B cell (primary cell): ENCODE measurements at regions of chr16 and their contacts with region 1.

Region 1: DNA sequence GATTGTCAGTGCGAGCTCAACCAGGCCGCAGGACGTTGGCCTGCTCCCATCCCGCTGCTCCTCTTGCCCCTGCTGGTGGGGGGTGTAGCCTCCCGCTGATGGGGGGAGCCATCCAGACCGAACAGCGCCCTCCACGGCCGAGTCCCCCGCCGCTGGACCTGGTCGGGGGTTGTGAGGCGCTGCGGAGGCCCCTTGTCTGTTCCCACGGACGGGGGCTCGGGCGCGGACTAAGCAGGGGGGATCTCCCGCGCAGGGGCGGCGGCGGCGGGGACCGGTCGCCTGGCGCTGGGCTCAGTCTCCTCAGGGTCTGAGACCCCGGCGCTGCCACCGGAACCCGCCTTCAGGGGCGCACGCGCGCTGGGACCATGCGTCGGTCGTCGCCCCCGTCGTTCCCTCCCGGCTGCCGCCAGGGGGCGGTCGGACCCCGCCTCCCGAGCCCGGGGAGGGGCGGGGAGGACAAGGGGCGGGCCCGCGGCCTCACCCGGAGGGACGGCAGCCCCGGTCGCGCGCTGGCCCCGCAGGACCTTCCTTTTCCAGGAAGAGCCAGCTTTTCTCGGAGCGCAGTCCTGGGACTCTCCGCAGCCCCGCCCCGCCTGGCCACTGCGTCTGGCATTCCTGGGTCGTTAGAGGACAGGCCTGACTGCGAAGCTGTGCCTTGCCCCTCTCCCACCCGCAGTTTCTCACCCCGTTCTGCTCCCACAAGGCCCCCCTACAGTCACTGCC is 6.3 kb upstream of the IL32 start:
- DNase-seq: peak; percentile 90
- ATAC-seq: peak; percentile 97
- H3K4me3 ChIP-seq: peak overlapping the region in 4 of 5 experiments; percentile 75 to 93 (median 82)
- H3K4me3 Mint-ChIP-seq: peak overlapping the region; percentile 87
- H3K27ac ChIP-seq: peak overlapping the region; percentile 38 to 74
- H3K27ac Mint-ChIP-seq: peak overlapping the region; percentile 65
- H3K4me1 ChIP-seq: peaks cover 20 to 22% of the 10 kb centered on the region in 2 donors
- H3K4me1 Mint-ChIP-seq: peaks cover 20% of the 10 kb centered on the region
- H3K27me3 ChIP-seq: peaks cover 0 to 6% (median 0%) of the 10 kb centered on the region in 4 experiments
- H3K27me3 Mint-ChIP-seq: no peaks in the 10 kb centered on the region
- CTCF ChIP-seq: peak; percentile 94

Region 2: DNA sequence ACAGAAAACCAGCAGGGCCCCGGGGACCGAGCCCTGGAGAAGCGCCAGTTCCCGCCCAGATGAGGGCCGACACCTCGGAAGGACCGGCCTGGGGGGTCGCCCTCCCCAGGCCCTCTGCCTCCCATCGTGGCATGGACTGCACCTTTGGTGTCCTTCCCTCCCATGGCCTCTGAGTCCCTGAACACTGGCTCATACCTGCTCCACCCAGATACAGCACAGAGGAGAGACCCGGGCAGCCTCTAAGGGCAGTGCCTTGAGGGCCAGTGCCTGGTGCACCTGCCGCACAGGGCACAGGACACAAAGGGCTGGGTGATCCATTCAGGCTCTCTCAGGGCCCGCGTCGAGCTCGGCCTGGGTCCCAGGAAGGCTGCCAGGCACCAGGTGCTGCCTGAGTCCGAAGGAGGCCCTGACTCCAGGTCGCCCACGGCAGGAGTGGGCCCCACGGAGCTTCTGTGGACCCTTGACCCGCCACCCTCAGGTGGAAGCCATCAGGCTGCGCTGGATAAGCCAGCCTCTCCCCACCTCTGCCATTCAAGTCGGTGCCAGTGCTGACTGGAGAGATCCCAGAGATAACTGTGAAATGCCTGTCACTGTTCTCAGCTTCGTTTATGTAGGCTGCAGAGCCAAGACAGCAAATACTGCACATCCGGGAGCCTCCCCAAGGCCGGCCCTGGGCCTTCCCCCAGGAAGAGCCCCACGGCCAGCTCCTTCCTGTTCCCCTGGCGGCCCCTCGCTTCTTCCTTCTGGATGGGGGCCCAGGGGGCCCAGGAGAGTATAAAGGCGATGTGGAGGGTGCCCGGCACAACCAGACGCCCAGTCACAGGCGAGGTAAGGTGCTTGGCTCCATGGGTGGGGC is 229.4 kb before region 1 on chr16 and contains the start of gene ZG16B:
- CTCF ChIA-PET with region 1: no interaction called
- POLR2A ChIA-PET with region 1: no interaction called
- intact Hi-C with region 1: no loop called
- DNase-seq: no peak
- ATAC-seq: no peak
- H3K4me3 ChIP-seq: no peak within 1 kb of the TSS
- H3K4me3 Mint-ChIP-seq: no peak within 1 kb of the TSS
- H3K27ac ChIP-seq: no peak within 1 kb of the TSS
- H3K27ac Mint-ChIP-seq: no peak within 1 kb of the TSS
- H3K4me1 ChIP-seq: no peaks in the 10 kb centered on the region
- H3K4me1 Mint-ChIP-seq: no peaks in the 10 kb centered on the region
- H3K27me3 ChIP-seq: peaks cover 0 to 29% (median 5%) of the 10 kb centered on the region in 4 experiments
- H3K27me3 Mint-ChIP-seq: peaks cover 16% of the 10 kb centered on the region
- CTCF ChIP-seq: no peak
- total RNA-seq, gene ZG16B: not detected in 2 replicates

Region 3: GRCh38 chr16:3029537-3030402 is 29.4 kb before region 1 on chr16:
- CTCF ChIA-PET with region 1: interaction called, 11 read pairs
- POLR2A ChIA-PET with region 1: interaction called, 3 read pairs
- intact Hi-C with region 1: loop called (anchors 1 kb)
- DNase-seq: peak; percentile 54
- ATAC-seq: no peak
- H3K4me3 ChIP-seq: no peak overlapping the region
- H3K4me3 Mint-ChIP-seq: peak overlapping the region; percentile 35
- H3K27ac ChIP-seq: no peak overlapping the region
- H3K27ac Mint-ChIP-seq: no peak overlapping the region
- H3K4me1 ChIP-seq: peaks cover 25 to 28% of the 10 kb centered on the region in 2 donors
- H3K4me1 Mint-ChIP-seq: peaks cover 20% of the 10 kb centered on the region
- H3K27me3 ChIP-seq: peaks cover 0 to 58% (median 28%) of the 10 kb centered on the region in 4 experiments
- H3K27me3 Mint-ChIP-seq: peaks cover 40% of the 10 kb centered on the region
- CTCF ChIP-seq: no peak

Region 4: DNA sequence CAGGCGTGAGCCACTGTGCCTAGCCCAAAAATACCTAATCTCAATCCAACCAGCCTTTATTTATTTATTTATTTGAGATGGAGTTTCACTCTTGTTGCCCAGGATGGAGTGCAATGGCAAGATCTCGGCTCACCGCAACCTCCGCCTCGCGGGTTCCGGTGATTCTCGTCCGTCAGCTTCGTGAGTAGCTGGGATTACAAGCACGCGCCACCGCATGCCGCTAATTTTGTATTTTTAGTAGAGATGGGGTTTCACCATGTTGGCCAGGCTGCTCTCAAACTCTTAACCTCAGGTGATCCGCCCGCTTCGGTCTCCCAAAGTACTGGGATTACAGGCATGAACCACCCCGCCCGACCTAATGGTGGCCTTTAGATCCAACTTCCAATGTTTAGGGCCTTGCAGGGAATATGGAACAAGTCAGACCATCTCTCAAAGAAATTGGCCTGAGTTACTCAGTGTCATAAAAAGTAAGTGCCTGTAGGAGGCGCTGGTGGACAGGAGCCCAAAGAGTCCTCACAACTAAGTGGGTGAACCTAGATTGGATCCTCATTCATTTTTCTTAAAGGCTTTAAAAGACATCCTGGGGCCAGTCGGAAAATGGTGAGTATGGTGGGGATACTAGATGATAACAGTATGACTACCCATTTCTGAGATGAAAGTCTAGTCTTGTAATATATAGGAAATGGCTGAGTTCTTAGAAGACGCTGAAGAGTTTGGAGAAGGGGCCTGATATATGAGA is 35.3 kb after region 1 on chr16:
- CTCF ChIA-PET with region 1: interaction called, 15 read pairs
- POLR2A ChIA-PET with region 1: interaction called, 5 read pairs
- intact Hi-C with region 1: no loop called
- DNase-seq: peak; percentile 68
- ATAC-seq: no peak
- H3K4me3 ChIP-seq: no peak overlapping the region
- H3K4me3 Mint-ChIP-seq: no peak overlapping the region
- H3K27ac ChIP-seq: no peak overlapping the region
- H3K27ac Mint-ChIP-seq: peak overlapping the region; percentile 34
- H3K4me1 ChIP-seq: peaks cover 9 to 12% of the 10 kb centered on the region in 2 donors
- H3K4me1 Mint-ChIP-seq: peaks cover 20% of the 10 kb centered on the region
- H3K27me3 ChIP-seq: peaks cover 0 to 3% (median 0%) of the 10 kb centered on the region in 4 experiments
- H3K27me3 Mint-ChIP-seq: no peaks in the 10 kb centered on the region
- CTCF ChIP-seq: peak; percentile 62

Region 5: DNA sequence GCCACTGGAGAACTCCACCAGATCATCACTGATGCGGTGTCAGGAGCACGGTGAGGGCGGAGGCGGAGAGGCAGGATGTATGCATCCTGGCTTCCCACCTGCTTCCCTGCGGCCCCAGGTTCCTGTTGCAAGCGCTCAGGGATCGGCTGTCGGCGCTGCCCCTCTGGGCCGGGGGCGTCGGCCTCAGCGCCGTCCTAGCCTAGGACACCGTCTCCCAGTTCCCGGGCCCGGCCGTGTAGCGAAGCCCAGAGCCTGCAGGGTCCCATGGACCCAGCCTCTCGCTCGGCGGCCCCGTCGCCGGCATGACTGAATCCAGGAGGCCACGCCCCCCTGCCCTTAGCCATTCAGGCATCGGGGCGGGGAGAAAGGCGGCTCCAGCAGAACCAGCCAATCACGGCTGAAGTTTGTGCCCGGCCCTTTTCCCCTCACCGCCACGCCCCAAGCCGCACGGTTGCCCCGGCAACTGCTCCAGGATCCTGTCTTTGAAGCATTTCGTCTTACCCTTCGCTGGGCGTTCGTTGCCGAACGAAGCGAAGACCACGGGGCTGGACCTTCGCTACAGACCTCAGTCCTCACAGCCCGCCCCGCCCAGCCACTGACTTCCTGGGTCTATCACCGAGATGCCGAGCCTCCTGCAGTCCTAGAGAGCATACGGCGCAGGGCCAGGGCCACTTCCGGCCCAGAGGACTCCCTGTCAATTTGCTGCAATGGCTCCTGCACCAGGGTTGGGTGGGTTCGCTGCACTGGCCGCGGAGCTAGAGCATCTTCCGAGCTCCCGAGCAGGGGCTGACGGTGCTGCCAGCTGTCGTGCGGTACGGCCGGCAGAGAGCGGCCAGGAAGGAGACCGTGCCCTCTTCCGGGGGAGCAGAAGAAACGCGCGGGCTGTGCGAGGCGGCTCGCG is 65.1 kb after region 1 on chr16:
- CTCF ChIA-PET with region 1: interaction called, 140 read pairs
- POLR2A ChIA-PET with region 1: interaction called, 9 read pairs
- intact Hi-C with region 1: loop called (anchors 1 kb)
- DNase-seq: peak; percentile 96
- ATAC-seq: peak; percentile 92
- H3K4me3 ChIP-seq: peak overlapping the region; percentile 4 to 94 (median 84)
- H3K4me3 Mint-ChIP-seq: peak overlapping the region; percentile 99
- H3K27ac ChIP-seq: peak overlapping the region; percentile 54 to 69
- H3K27ac Mint-ChIP-seq: peak overlapping the region; percentile 98
- H3K4me1 ChIP-seq: peaks cover 20 to 31% of the 10 kb centered on the region in 2 donors
- H3K4me1 Mint-ChIP-seq: peaks cover 28% of the 10 kb centered on the region
- H3K27me3 ChIP-seq: no peaks in the 10 kb centered on the region
- H3K27me3 Mint-ChIP-seq: no peaks in the 10 kb centered on the region
- CTCF ChIP-seq: no peak

Region 6: DNA sequence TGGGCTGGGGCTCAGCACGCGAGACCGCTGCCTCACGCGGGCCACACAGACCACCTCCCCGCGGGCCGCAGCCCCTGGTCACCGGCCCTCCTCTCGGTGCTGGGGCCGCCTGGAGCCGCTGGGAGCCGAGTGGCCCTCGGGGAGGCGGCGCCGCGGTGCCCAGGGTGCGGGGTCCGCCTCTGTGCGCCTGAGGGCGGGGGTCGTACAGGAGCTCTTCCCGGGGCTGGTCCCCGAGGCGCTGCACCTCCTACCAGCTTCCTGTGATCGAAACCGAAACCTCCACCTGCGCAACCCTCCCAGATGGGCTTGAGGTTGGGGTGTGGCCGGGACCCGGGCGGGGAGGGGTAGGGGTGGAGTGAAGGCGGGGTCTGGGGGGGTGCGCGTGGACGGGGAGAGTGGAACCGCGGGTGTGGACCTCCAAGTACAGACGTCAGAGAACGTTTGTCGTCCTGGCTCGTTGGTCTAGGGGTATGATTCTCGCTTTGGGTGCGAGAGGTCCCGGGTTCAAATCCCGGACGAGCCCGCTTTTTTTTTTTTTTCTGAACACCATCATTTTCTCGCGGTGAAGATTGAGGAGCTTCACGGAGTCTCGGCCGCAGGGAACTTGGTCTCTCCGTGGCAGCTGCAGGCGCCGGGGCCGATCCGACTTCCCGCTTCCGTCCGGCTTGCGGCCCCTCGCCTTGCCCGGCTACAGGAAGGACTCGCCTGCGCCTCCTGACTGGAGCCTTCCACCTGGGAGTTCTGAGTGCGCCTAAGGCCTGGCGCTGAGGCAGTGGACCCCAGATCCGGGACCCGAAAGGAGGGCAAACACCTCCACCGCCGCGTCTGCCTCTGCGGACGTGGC is 99.5 kb after region 1 on chr16:
- CTCF ChIA-PET with region 1: no interaction called
- POLR2A ChIA-PET with region 1: interaction called, 10 read pairs
- intact Hi-C with region 1: no loop called
- DNase-seq: peak; percentile 92
- ATAC-seq: peak; percentile 91
- H3K4me3 ChIP-seq: peak overlapping the region; percentile 67 to 96 (median 84)
- H3K4me3 Mint-ChIP-seq: peak overlapping the region; percentile 93
- H3K27ac ChIP-seq: peak overlapping the region; percentile 43 to 60
- H3K27ac Mint-ChIP-seq: peak overlapping the region; percentile 95
- H3K4me1 ChIP-seq: peaks cover 17 to 27% of the 10 kb centered on the region in 2 donors
- H3K4me1 Mint-ChIP-seq: peaks cover 18% of the 10 kb centered on the region
- H3K27me3 ChIP-seq: peaks cover 0 to 6% (median 2%) of the 10 kb centered on the region in 4 experiments
- H3K27me3 Mint-ChIP-seq: peaks cover 2% of the 10 kb centered on the region
- CTCF ChIP-seq: no peak

Region 7: GRCh38 chr16:3173892-3174617 is 114.9 kb after region 1 on chr16:
- CTCF ChIA-PET with region 1: interaction called, 12 read pairs
- POLR2A ChIA-PET with region 1: interaction called, 4 read pairs
- intact Hi-C with region 1: no loop called
- DNase-seq: peak; percentile 44
- ATAC-seq: no peak
- H3K4me3 ChIP-seq: peak overlapping the region in 1 of 5 experiments; percentile 33
- H3K4me3 Mint-ChIP-seq: peak overlapping the region; percentile 23
- H3K27ac ChIP-seq: no peak overlapping the region
- H3K27ac Mint-ChIP-seq: no peak overlapping the region
- H3K4me1 ChIP-seq: peaks cover 40 to 47% of the 10 kb centered on the region in 2 donors
- H3K4me1 Mint-ChIP-seq: peaks cover 29% of the 10 kb centered on the region
- H3K27me3 ChIP-seq: peaks cover 0 to 84% (median 55%) of the 10 kb centered on the region in 4 experiments
- H3K27me3 Mint-ChIP-seq: peaks cover 77% of the 10 kb centered on the region
- CTCF ChIP-seq: no peak